IMR-90 (cell line): ENCODE measurements at regions of chr15 and their contacts with region 1.

Region 1: DNA sequence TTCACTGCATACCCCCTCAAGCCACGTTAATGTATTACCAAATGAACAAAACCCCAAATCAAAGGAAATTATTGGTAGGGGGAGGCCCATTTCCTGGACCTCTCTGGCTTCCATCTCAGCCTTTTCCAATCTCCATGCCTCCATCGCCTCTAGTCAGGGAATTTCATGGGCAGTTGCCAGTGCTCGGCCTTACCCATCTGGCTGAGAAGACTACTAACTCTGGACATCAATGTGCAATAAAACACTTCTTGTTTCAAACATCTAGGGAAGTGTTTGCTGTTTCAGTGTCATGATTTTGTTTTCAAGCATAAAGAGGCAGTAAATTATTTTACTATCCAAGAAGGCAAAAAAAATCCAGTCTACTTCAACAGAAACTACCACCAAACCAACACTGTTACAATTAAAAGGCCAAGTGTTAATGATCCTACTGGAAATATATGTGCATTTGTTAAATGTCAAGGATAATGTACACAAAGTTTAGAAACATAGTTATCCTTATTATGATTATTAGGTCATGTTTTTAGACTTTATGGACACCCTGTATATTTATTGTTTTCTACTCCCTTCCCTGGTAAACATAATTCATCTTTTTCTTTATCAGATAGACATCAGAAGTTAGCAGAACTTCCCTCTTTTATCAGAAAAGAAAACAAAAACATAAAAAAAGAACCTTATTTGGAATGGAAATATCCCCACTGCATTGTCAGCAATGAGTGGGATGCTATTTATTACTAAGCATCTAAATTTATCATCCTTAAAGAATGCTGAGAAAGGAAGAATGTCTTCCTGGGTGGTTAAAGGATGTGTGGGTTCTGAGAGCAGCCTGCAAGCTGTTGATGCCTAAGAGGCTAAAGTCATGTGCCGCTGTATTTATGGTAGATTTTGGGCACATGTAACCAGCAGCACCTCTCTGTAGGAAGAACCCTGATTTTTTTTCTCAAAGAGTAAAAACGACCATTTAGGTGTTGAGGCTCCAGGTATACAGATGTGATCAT is 15.2 kb downstream of the LDHAL6B start:
- DNase-seq: peak; percentile 83
- ATAC-seq: peak; percentile 98
- H3K4me3 ChIP-seq: no peak overlapping the region
- H3K27ac ChIP-seq: peak overlapping the region; percentile 17; the same call in 1 of the 2 replicates
- H3K4me1 ChIP-seq: no peaks in the 10 kb centered on the region; the same call in 1 of the 2 replicates
- H3K27me3 ChIP-seq: no peaks in the 10 kb centered on the region
- CTCF ChIP-seq: no peak
- POLR2A ChIP-seq: no peak
- RAD21 ChIP-seq: no peak

Region 2: GRCh38 chr15:58909616-58910015 is 312.2 kb before region 1 on chr15:
- CTCF ChIA-PET with region 1: no interaction called
- POLR2A ChIA-PET with region 1: no interaction called
- dilution Hi-C with region 1: no loop called
- in situ Hi-C with region 1: no loop called
- intact Hi-C with region 1: no loop called
- DNase-seq: peak; percentile 35
- ATAC-seq: peak; percentile 84
- H3K4me3 ChIP-seq: no peak overlapping the region
- H3K27ac ChIP-seq: no peak overlapping the region
- H3K4me1 ChIP-seq: no peaks in the 10 kb centered on the region
- H3K27me3 ChIP-seq: no peaks in the 10 kb centered on the region
- CTCF ChIP-seq: no peak
- POLR2A ChIP-seq: no peak
- RAD21 ChIP-seq: no peak

Region 3: DNA sequence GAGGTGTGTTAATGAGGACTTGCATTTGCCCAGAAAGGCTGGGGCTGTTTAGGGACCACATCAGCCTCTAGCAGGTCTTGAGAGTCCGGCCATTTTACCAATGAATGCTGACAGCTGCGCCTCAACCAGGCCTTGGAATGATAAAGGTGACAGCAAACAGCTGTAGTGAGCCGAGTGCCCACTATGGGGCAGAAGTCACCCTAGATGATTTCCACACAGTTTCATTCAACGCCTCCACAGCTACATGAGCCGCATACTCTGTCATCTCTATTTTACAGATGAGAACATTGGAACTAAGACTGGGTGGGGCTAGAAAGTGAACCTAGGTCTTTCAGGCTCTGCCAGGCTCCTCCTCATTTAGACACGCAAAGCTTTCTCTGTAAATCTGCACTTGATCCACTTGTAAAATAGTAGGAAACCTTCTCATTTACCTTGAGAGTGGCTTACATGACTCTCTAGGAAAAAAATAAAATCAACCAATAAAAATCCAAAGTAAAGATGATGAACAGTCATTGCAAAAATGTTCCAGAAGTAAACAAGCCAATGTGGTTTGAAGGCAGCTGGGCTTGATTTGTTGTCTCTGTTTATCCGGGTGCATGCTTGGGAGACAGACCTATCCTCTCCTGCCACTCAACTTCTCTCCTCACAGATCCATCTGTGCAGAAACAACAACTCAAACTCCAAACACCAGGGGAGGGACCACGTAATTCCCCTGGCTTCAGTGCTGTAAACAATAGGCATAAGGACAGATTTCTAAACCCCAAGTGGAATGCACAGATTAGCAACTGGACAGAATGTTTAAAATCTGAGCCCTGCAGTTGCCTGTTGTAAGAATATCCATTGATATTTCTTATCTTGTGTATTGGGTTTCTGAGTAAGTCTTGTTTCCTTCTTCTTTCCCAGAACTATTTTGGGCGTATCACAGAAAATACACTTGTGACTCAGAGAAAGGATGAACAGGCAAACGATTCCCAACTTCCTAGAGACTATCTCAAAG is 46.7 kb before region 1 on chr15:
- CTCF ChIA-PET with region 1: no interaction called
- POLR2A ChIA-PET with region 1: no interaction called
- dilution Hi-C with region 1: no loop called
- in situ Hi-C with region 1: no loop called
- intact Hi-C with region 1: loop called (anchors 5 kb)
- DNase-seq: peak; percentile 87
- ATAC-seq: peak; percentile 84
- H3K4me3 ChIP-seq: no peak overlapping the region
- H3K27ac ChIP-seq: peak overlapping the region; percentile 59; the same call in 1 of the 2 replicates
- H3K4me1 ChIP-seq: peaks cover 12% of the 10 kb centered on the region
- H3K27me3 ChIP-seq: no peaks in the 10 kb centered on the region
- CTCF ChIP-seq: peak; percentile 62
- POLR2A ChIP-seq: no peak
- RAD21 ChIP-seq: peak; percentile 59

Region 4: GRCh38 chr15:59340325-59340724 is 118.5 kb after region 1 on chr15:
- CTCF ChIA-PET with region 1: no interaction called
- POLR2A ChIA-PET with region 1: interaction called, 11 read pairs
- dilution Hi-C with region 1: no loop called
- in situ Hi-C with region 1: no loop called
- intact Hi-C with region 1: no loop called
- DNase-seq: peak; percentile 37
- ATAC-seq: no peak
- H3K4me3 ChIP-seq: no peak overlapping the region
- H3K27ac ChIP-seq: no peak overlapping the region
- H3K4me1 ChIP-seq: no peaks in the 10 kb centered on the region
- H3K27me3 ChIP-seq: no peaks in the 10 kb centered on the region
- CTCF ChIP-seq: no peak
- POLR2A ChIP-seq: no peak
- RAD21 ChIP-seq: no peak